Caco-2 (cell line): ENCODE measurements at regions of chr20 and their contacts with region 1.

Region 1: GRCh38 chr20:15328084-15328483 is 990.7 kb upstream of the FLRT3 start:
- DNase-seq: no peak
- H3K4me3 ChIP-seq: no peak overlapping the region
- H3K4me3 Mint-ChIP-seq: no peak overlapping the region
- H3K27ac Mint-ChIP-seq: no peak overlapping the region
- H3K4me1 ChIP-seq: no peaks in the 10 kb centered on the region
- H3K4me1 Mint-ChIP-seq: no peaks in the 10 kb centered on the region
- H3K27me3 ChIP-seq: no peaks in the 10 kb centered on the region
- H3K27me3 Mint-ChIP-seq: no peaks in the 10 kb centered on the region
- CTCF ChIP-seq: no peak

Region 2: DNA sequence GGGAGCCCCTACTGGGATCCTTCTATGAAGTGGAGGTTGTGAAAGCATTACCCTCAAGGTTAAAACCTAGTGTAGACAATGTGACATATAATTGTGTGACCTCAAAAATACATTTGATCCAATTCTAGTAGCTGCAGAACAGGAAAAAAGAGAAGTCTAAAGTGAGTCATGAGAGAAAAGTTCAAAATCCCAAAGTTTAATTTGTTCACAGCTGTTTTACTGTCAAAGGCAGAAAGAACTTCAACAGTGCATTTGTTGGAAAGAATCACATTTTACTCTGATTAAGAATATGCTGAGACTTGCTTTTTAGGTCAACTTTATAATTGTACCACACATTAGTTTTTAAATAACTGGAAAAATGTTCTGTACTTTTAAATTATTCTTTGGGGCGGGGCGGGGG is 36.7 kb after region 1 on chr20:
- CTCF ChIA-PET with region 1: no interaction called
- POLR2A ChIA-PET with region 1: no interaction called
- intact Hi-C with region 1: loop called (anchors 1 kb)
- DNase-seq: no peak
- H3K4me3 ChIP-seq: no peak overlapping the region
- H3K4me3 Mint-ChIP-seq: no peak overlapping the region
- H3K27ac Mint-ChIP-seq: no peak overlapping the region
- H3K4me1 ChIP-seq: no peaks in the 10 kb centered on the region
- H3K4me1 Mint-ChIP-seq: peaks cover 13% of the 10 kb centered on the region
- H3K27me3 ChIP-seq: no peaks in the 10 kb centered on the region
- H3K27me3 Mint-ChIP-seq: no peaks in the 10 kb centered on the region
- CTCF ChIP-seq: no peak